Caco-2 (cell line): ENCODE measurements at regions of chr6 and their contacts with region 1.

Region 1: DNA sequence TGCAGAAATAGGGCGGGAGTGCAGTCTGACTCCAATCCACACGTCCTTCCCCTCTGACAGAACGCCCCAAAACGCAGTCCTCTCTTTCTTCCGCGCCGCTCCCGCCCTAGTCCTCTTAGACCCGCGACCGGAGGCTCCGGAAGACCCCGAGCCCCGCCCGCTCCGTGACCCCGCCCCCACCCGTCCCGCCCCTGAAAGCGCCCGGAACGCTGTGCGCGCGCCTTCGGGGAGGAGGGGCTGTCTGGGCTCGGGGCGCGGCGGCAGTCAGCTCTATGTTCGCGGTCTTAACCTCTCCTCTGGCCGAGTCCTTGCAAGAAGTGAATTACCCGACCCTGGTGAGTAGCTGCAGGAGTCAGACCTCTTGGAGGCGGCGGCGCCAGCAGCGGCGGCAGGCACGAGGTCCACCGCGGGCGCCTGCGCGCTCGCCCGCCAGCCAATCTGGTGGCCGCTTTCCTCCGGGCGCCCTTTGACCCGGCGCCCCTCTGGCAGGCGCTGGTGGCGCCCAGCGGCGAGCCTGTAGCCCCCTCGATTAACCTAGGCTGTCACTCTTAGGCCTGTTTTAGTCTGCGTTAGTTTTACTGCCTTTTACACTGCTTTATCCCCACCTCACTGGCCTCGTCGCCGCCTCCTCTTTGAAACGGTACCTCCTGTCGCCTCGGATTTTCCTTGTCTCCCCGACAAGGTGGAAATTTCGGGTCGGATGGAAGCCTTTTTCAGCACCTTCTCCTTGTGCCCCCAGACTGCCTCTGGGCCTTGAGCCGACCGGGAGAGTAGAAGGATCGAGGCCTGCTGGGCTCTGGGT is at the start of gene MANEA:
- DNase-seq: peak; percentile 91 to 92
- H3K4me3 ChIP-seq: peak within 1 kb of the TSS; percentile 54
- H3K4me3 Mint-ChIP-seq: peak within 1 kb of the TSS; percentile 97
- H3K27ac Mint-ChIP-seq: peak within 1 kb of the TSS; percentile 89
- H3K4me1 ChIP-seq: peaks cover 16% of the 10 kb centered on the region
- H3K4me1 Mint-ChIP-seq: peaks cover 14% of the 10 kb centered on the region
- H3K27me3 ChIP-seq: no peaks in the 10 kb centered on the region
- H3K27me3 Mint-ChIP-seq: no peaks in the 10 kb centered on the region
- CTCF ChIP-seq: no peak
- total RNA-seq, gene MANEA: 15.7 and 17.1 TPM in 2 replicates

Region 2: DNA sequence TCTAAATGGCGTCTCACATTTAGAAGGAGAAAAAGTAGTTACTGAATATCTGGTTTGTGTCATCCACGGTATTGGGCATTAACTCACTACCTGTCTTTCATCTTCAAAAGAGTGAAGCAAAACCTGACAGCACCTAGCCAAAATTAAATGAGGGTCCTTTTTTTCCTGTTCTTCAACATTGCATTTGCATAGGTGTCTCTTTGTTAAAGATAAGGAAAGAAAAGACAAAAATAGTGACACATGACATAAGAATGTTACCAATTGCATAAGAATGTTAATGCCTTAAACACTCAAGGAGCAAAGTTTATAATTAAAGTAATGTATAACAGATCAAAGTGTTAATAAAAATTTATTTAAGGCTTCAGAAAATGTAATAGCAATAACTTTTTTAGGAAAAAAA is 61.5 kb before region 1 on chr6:
- CTCF ChIA-PET with region 1: no interaction called
- POLR2A ChIA-PET with region 1: no interaction called
- intact Hi-C with region 1: loop called (anchors 2 kb)
- DNase-seq: peak in 1 of 2 experiments; percentile 18
- H3K4me3 ChIP-seq: no peak overlapping the region
- H3K4me3 Mint-ChIP-seq: peak overlapping the region; percentile 60
- H3K27ac Mint-ChIP-seq: peak overlapping the region; percentile 78
- H3K4me1 ChIP-seq: peaks cover 37% of the 10 kb centered on the region
- H3K4me1 Mint-ChIP-seq: peaks cover 30% of the 10 kb centered on the region
- H3K27me3 ChIP-seq: no peaks in the 10 kb centered on the region
- H3K27me3 Mint-ChIP-seq: no peaks in the 10 kb centered on the region
- CTCF ChIP-seq: no peak

Region 3: DNA sequence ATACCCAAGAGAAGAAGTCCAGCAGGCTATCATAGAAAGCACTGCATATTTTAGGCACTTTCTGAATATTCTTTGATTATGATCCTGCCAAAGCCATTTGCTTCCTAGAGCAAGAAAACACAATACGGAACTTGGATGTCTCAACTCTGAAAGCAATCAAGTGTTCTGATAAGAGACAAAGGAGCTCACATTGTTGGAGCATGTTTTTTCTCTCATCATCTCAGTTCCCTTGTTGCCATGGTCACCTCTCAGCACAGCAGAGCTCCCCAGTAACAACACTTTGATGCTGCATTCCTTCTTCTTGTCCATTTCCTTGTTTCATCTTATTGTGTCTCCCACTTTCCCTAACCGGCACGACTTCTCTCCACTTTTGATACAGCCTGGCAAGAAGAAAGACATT is 269.6 kb after region 1 on chr6:
- CTCF ChIA-PET with region 1: no interaction called
- POLR2A ChIA-PET with region 1: no interaction called
- intact Hi-C with region 1: loop called (anchors 10 kb)
- DNase-seq: peak in 1 of 2 experiments; percentile 30
- H3K4me3 ChIP-seq: no peak overlapping the region
- H3K4me3 Mint-ChIP-seq: no peak overlapping the region
- H3K27ac Mint-ChIP-seq: no peak overlapping the region
- H3K4me1 ChIP-seq: peaks cover 7% of the 10 kb centered on the region
- H3K4me1 Mint-ChIP-seq: no peaks in the 10 kb centered on the region
- H3K27me3 ChIP-seq: no peaks in the 10 kb centered on the region
- H3K27me3 Mint-ChIP-seq: no peaks in the 10 kb centered on the region
- CTCF ChIP-seq: no peak

Region 4: GRCh38 chr6:95866732-95867131 is 289.2 kb after region 1 on chr6:
- CTCF ChIA-PET with region 1: no interaction called
- POLR2A ChIA-PET with region 1: no interaction called
- intact Hi-C with region 1: loop called (anchors 5 kb)
- DNase-seq: peak; percentile 39 to 43
- H3K4me3 ChIP-seq: no peak overlapping the region
- H3K4me3 Mint-ChIP-seq: no peak overlapping the region
- H3K27ac Mint-ChIP-seq: no peak overlapping the region
- H3K4me1 ChIP-seq: no peaks in the 10 kb centered on the region
- H3K4me1 Mint-ChIP-seq: peaks cover 7% of the 10 kb centered on the region
- H3K27me3 ChIP-seq: no peaks in the 10 kb centered on the region
- H3K27me3 Mint-ChIP-seq: no peaks in the 10 kb centered on the region
- CTCF ChIP-seq: peak; percentile 50 to 54